ENCODE measurements at regions of chr6 and their contacts with region 1.

Region 1: GRCh38 chr6:41887331-41887751 is 7.8 kb downstream of the USP49 start:
- DNase-seq: no peak
- H3K4me3 ChIP-seq: no peak overlapping the region
- H3K27ac ChIP-seq: no peak overlapping the region
- H3K4me1 ChIP-seq: no peaks in the 10 kb centered on the region
- H3K27me3 ChIP-seq: no peaks in the 10 kb centered on the region
- CTCF ChIP-seq: no peak
- POLR2A ChIP-seq: no peak

Region 2: GRCh38 chr6:42704241-42704936 is 817.0 kb after region 1 on chr6:
- intact Hi-C with region 1: loop called (anchors 10 kb)
- DNase-seq: peak; percentile 36 to 47
- H3K4me3 ChIP-seq: peak overlapping the region; percentile 18 to 27
- H3K27ac ChIP-seq: peak overlapping the region in 1 of 2 donors; percentile 23
- H3K4me1 ChIP-seq: no peaks in the 10 kb centered on the region
- H3K27me3 ChIP-seq: no peaks in the 10 kb centered on the region
- CTCF ChIP-seq: no peak
- POLR2A ChIP-seq: no peak